ENCODE measurements at regions of chr19 and their contacts with region 1.

Region 1: GRCh38 chr19:20923077-20923871 is at the start of gene ZNF85:
- DNase-seq: peak; percentile 84
- ATAC-seq: peak; percentile 99
- H3K4me3 ChIP-seq: peak within 1 kb of the TSS; percentile 74
- H3K27ac ChIP-seq: peak within 1 kb of the TSS; percentile 71
- H3K4me1 ChIP-seq: no peaks in the 10 kb centered on the region
- H3K27me3 ChIP-seq: no peaks in the 10 kb centered on the region
- CTCF ChIP-seq: no peak
- EP300 ChIP-seq: no peak
- POLR2A ChIP-seq: peak; percentile 82
- RAD21 ChIP-seq: no peak
- polyA plus RNA-seq, gene ZNF85: 25.8 to 31.7 TPM

Region 2: DNA sequence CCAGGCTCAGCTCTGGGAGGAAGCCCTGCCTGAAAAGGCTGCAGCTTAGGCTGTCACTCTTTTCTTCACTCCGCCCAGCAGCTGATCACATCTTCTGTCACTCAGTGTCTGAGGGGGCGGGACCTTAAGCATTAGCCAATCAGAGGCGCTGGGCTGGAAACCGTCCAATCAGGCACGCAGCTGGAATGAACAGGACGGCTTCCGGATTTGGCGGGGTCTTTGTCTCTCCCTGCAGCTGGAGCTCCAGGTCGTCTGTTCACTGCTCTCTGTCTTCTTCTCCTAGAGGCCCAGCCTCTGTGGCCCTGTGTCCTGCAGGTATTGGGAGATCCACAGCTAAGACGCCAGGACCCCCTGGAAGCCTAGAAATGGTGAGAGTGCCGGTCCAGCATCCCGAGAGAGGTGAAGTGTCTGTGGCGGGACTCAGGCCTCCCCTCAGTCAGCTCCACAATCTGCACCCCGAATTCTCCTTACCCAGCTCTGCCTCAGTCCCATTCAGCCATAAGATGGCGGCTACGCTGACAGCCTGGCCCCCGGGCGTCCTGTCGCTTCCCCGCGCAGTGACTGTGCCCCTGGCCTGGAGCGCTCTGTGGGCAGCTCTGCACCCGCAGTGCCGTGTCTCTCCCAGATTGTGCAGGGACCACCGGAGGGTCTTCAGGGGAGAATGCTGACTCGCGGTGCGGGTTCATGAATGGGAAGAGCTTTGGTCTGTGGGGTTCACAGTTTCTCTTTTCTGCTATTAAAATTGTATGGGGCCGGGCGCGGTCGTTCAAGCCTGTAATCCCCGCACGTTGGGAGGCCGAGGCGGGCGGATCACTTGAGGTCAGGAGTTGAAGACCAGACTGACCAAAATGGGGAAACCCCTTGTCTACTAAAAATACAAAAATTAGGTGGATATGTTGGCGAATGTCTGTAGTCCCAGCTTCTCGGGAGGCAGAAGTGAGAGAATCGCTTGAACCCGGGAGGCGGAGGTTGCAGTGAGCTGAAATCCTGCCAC is 146.9 kb before region 1 on chr19 and contains the start of gene ZNF66:
- CTCF ChIA-PET with region 1: no interaction called
- POLR2A ChIA-PET with region 1: interaction called, 3 read pairs
- RAD21 ChIA-PET with region 1: interaction called, 12 read pairs
- SMC1A ChIA-PET with region 1: interaction called, 10 read pairs
- in situ Hi-C with region 1: no loop called
- intact Hi-C with region 1: no loop called
- DNase-seq: peak; percentile 89
- ATAC-seq: peak; percentile 98
- H3K4me3 ChIP-seq: peak within 1 kb of the TSS; percentile 88
- H3K27ac ChIP-seq: peak within 1 kb of the TSS; percentile 80
- H3K4me1 ChIP-seq: no peaks in the 10 kb centered on the region
- H3K27me3 ChIP-seq: no peaks in the 10 kb centered on the region
- CTCF ChIP-seq: no peak
- EP300 ChIP-seq: no peak
- POLR2A ChIP-seq: peak; percentile 87
- RAD21 ChIP-seq: no peak
- polyA plus RNA-seq, gene ZNF66: 0.62 to 1.4 TPM

Measured in GM12878 (cell line).